ENCODE measurements at regions of chrX and their contacts with region 1.

Region 1: GRCh38 chrX:10189317-10190268 is 32.8 kb downstream of the CLCN4 start:
- DNase-seq: peak; percentile 61 to 67
- H3K4me3 ChIP-seq: no peak overlapping the region
- H3K27ac ChIP-seq: no peak overlapping the region
- H3K4me1 ChIP-seq: no peaks in the 10 kb centered on the region
- H3K27me3 ChIP-seq: no peaks in the 10 kb centered on the region
- CTCF ChIP-seq: peak; percentile 24 to 82 (median 62)
- POLR2A ChIP-seq: no peak

Region 2: GRCh38 chrX:10142041-10142599 is 47.5 kb before region 1 on chrX:
- intact Hi-C with region 1: no loop called
- DNase-seq: no peak
- H3K4me3 ChIP-seq: no peak overlapping the region
- H3K27ac ChIP-seq: no peak overlapping the region
- H3K4me1 ChIP-seq: no peaks in the 10 kb centered on the region
- H3K27me3 ChIP-seq: no peaks in the 10 kb centered on the region
- CTCF ChIP-seq: no peak
- POLR2A ChIP-seq: no peak

Region 3: DNA sequence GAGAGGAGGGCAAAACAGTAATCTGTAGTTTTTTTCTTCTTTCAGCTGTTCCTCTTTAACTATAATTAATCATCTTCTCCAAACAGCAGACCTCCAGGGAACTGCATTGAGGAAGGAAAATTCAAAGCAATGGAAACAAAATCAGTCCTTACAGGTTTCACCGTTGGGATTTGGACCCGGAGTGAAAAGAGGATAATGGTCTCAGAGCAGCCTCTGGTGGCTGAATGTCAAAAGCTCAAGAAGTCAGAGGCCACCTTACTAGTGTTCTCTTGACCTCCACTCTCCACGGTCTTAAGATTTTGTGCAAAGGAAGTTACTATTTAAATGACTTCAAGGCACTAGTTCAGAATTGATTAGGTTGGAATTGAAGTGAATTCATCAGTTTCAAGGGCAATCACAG is 446.7 kb after region 1 on chrX:
- intact Hi-C with region 1: loop called (anchors 10 kb)
- DNase-seq: peak; percentile 43 to 44
- H3K4me3 ChIP-seq: no peak overlapping the region
- H3K27ac ChIP-seq: no peak overlapping the region
- H3K4me1 ChIP-seq: no peaks in the 10 kb centered on the region
- H3K27me3 ChIP-seq: no peaks in the 10 kb centered on the region
- CTCF ChIP-seq: peak in 4 of 6 experiments; percentile 49 to 71 (median 63)
- POLR2A ChIP-seq: no peak

Region 4: GRCh38 chrX:10722851-10723250 is 533.3 kb after region 1 on chrX:
- intact Hi-C with region 1: loop called (anchors 10 kb)
- DNase-seq: peak; percentile 58 to 60
- H3K4me3 ChIP-seq: no peak overlapping the region
- H3K27ac ChIP-seq: no peak overlapping the region
- H3K4me1 ChIP-seq: no peaks in the 10 kb centered on the region
- H3K27me3 ChIP-seq: no peaks in the 10 kb centered on the region
- CTCF ChIP-seq: peak; percentile 25 to 68 (median 62)
- POLR2A ChIP-seq: no peak

Region 5: DNA sequence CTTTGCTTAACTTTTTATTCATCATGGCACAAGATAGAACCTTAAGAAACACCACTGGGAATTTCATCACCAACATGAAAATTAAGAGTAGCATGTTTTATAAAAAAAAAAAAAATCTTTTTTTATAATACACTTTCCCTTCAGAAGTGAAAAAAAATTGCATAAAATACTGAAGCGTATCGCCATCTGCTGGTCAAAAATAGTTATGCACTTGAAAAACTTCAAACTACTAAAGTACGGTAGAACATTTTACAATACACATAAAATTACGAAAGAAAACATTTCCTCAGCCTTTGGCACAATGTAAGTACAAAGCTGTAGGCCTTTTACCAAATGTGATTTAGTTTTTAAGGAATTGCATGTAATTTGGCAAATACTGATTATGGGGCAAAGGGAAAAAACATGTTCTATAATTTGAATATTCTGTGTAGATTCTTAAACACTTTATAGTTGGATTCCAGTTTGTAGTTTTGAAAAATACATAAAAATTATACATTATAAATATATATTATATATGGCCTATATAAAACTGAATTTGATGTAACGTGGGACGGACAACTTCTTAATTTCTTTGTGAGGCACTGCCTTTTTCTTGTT is 948.0 kb after region 1 on chrX:
- intact Hi-C with region 1: loop called (anchors 5 kb)
- DNase-seq: no peak
- H3K4me3 ChIP-seq: no peak overlapping the region
- H3K27ac ChIP-seq: no peak overlapping the region
- H3K4me1 ChIP-seq: no peaks in the 10 kb centered on the region
- H3K27me3 ChIP-seq: no peaks in the 10 kb centered on the region
- CTCF ChIP-seq: peak in 5 of 6 experiments; percentile 16 to 63 (median 55)
- POLR2A ChIP-seq: no peak

Measured in thyroid gland (tissue), 4 donors.